ENCODE measurements at regions of chr18 and their contacts with region 1.

Region 1: DNA sequence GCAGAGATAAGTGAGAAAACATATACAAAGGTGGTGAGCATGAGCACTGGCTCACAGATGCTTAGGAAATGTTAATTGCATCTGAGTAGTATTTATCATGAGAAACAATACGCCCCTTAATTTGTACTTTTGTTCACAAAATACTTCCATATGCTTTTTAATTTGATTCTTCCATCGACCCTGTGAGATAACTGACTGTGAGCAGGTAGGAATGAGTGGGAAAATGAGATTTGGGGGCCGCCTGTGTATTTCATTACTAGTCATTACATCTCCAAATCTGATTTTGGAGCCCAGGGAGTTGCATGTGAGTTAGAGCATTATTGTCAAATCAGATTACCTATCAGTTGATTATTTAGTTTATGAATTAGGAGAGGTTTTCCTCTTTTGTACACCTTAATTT is 36.7 kb upstream of the NPC1 start:
- DNase-seq: no peak
- H3K4me3 ChIP-seq: no peak overlapping the region
- H3K27ac ChIP-seq: no peak overlapping the region
- H3K4me1 ChIP-seq: peaks cover 11% of the 10 kb centered on the region
- H3K27me3 ChIP-seq: peaks cover 11% of the 10 kb centered on the region
- CTCF ChIP-seq: no peak

Region 2: GRCh38 chr18:23703057-23703986 is 80.3 kb after region 1 on chr18:
- intact Hi-C with region 1: loop called (anchors 2 kb)
- DNase-seq: peak; percentile 36
- H3K4me3 ChIP-seq: no peak overlapping the region
- H3K27ac ChIP-seq: no peak overlapping the region
- H3K4me1 ChIP-seq: no peaks in the 10 kb centered on the region
- H3K27me3 ChIP-seq: no peaks in the 10 kb centered on the region
- CTCF ChIP-seq: peak; percentile 43